ENCODE measurements at regions of chr3 and their contacts with region 1.

Region 1: DNA sequence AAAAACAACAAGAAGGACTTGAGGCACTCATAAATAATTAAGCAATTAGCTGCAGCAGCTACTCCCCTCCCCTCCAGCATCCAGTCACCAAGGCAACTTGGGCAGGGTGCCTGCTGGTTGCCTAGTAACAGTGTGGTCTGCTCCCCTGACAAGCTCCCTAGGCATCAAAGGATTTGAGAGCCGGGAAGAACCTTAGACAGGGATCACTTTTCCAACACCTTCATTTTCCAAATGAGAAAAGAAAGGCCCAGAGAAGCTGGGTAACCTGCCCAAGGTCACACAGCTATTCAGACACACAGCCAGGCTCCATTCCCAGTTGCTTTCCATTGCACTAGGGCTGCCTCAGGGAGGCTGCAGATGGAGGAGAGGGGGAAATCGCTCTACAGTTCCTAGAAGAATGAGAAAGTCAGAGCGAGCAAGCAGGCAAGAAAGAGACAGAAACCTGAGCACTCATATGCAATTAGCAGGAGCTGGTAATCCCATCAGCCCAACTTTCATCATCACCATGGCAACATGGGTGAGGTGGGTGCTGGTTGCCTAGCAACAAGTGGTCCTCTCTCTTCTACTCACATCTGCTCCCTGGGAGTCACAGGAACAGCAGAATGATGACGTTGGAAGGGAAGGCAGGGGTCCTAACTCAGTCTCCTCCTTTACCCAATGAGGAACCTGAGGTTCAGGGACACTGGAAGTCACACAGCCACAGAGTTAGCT is 3.6 kb upstream of the EIF4E3 start:
- DNase-seq: no peak
- ATAC-seq: no peak
- H3K4me3 ChIP-seq: no peak overlapping the region
- H3K27ac ChIP-seq: no peak overlapping the region
- H3K4me1 ChIP-seq: no peaks in the 10 kb centered on the region
- H3K27me3 ChIP-seq: peaks cover 6% of the 10 kb centered on the region
- CTCF ChIP-seq: no peak

Region 2: DNA sequence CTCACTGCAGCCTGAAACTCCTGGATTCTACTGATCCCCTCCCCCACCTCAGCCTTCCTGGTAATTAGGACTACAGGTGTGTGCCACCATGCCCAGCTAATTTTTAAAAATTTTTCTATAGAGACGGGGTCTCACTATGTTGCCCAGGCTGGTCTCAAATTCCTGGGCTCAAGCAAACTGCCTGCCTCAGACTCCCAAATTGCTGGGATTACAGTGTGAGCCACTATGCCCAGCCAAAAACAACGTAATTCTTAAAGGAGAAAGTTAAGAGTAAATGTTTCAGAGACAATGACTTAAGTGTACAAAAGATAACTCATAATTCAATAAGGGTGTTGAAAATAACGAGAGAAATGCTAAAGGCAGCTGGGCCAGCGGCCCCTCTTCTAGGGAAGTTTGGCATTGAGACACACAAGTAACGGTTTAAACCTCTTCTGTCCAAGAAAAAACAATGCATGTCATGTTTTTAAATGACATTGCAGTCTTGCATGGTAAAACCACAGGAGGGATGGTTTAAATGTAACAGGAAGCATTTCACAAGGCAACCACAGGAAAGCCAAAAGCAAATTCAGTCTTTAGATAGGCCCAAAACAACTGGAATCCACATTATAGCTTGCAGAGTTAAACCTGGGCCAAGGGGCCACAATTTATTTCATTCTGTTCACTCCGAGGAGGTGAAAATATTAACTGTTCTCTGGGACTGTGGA is 51.0 kb after region 1 on chr3:
- CTCF ChIA-PET with region 1: no interaction called
- POLR2A ChIA-PET with region 1: interaction called, 11 read pairs
- in situ Hi-C with region 1: no loop called
- intact Hi-C with region 1: no loop called
- DNase-seq: no peak
- ATAC-seq: no peak
- H3K4me3 ChIP-seq: no peak overlapping the region
- H3K27ac ChIP-seq: no peak overlapping the region
- H3K4me1 ChIP-seq: no peaks in the 10 kb centered on the region
- H3K27me3 ChIP-seq: peaks cover 20% of the 10 kb centered on the region
- CTCF ChIP-seq: no peak